ENCODE measurements at regions of chr16 and their contacts with region 1.

Region 1: DNA sequence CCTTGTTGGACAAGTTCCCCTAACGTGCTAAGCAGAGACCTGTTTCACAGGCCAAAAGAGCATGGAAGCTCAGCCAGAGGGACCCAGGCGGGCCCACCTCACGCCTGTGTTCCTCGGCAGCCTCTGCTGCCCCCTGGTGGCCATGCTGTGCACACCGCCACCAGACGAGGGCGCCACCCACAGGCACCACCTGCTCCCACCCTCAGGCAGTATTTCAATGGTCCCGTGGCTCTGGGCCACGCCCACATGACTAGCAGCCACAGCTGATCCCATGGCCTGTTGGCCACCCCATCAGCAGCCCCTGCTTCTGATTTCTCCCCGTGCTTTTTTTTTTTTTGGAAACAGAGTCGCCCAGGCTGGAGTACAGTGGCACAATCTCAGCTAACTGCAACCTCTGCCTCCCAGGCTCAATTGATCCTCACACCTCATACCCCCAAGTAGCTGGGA is 18.9 kb downstream of the MPG start:
- DNase-seq: peak; percentile 88 to 96
- ATAC-seq: peak; percentile 84 to 88
- H3K4me3 ChIP-seq: no peak overlapping the region
- H3K27ac ChIP-seq: no peak overlapping the region
- H3K4me1 ChIP-seq: peaks cover 10% of the 10 kb centered on the region
- CTCF ChIP-seq: peak; percentile 100
- EP300 ChIP-seq: no peak
- POLR2A ChIP-seq: no peak
- RAD21 ChIP-seq: peak; percentile 71 to 72

Region 2: GRCh38 chr16:45454-45853 is 51.5 kb before region 1 on chr16:
- CTCF ChIA-PET with region 1: interaction called, 16 read pairs
- POLR2A ChIA-PET with region 1: no interaction called
- DNase-seq: no peak
- ATAC-seq: peak in 1 of 2 experiments; percentile 53; a peak in 1 of 6 replicates
- H3K4me3 ChIP-seq: no peak overlapping the region
- H3K27ac ChIP-seq: no peak overlapping the region
- H3K4me1 ChIP-seq: peaks cover 16% of the 10 kb centered on the region; the same call in 2 of the 3 replicates
- CTCF ChIP-seq: no peak
- EP300 ChIP-seq: no peak
- POLR2A ChIP-seq: no peak
- RAD21 ChIP-seq: no peak

Region 3: GRCh38 chr16:77807-78443 is 19.0 kb before region 1 on chr16 and contains the start of gene MPG:
- CTCF ChIA-PET with region 1: interaction called, 718 read pairs
- POLR2A ChIA-PET with region 1: interaction called, 8 read pairs
- DNase-seq: peak; percentile 77 to 98
- ATAC-seq: peak; percentile 54 to 76
- H3K4me3 ChIP-seq: peak within 1 kb of the TSS; percentile 94
- H3K27ac ChIP-seq: peak within 1 kb of the TSS; percentile 97 to 98
- H3K4me1 ChIP-seq: peaks cover 30% of the 10 kb centered on the region
- CTCF ChIP-seq: no peak
- EP300 ChIP-seq: no peak
- POLR2A ChIP-seq: peak; percentile 73
- RAD21 ChIP-seq: no peak
- polyA plus RNA-seq, gene MPG: 25.5 and 28.2 TPM in 2 replicates

Region 4: GRCh38 chr16:84718-85406 is 12.1 kb before region 1 on chr16:
- CTCF ChIA-PET with region 1: interaction called, 718 read pairs
- POLR2A ChIA-PET with region 1: no interaction called
- DNase-seq: no peak
- ATAC-seq: peak; percentile 14 to 36; a peak in 5 of 6 replicates
- H3K4me3 ChIP-seq: no peak overlapping the region
- H3K27ac ChIP-seq: peak overlapping the region in 1 of 2 experiments; percentile 60; a peak in 3 of 6 replicates
- H3K4me1 ChIP-seq: peaks cover 10% of the 10 kb centered on the region
- CTCF ChIP-seq: no peak
- EP300 ChIP-seq: no peak
- POLR2A ChIP-seq: no peak
- RAD21 ChIP-seq: no peak

Region 5: GRCh38 chr16:129075-129474 is 32.1 kb after region 1 on chr16:
- CTCF ChIA-PET with region 1: interaction called, 17 read pairs
- POLR2A ChIA-PET with region 1: no interaction called
- DNase-seq: no peak
- ATAC-seq: no peak
- H3K4me3 ChIP-seq: no peak overlapping the region
- H3K27ac ChIP-seq: no peak overlapping the region
- H3K4me1 ChIP-seq: no peaks in the 10 kb centered on the region
- CTCF ChIP-seq: no peak
- EP300 ChIP-seq: no peak
- POLR2A ChIP-seq: no peak
- RAD21 ChIP-seq: no peak

Region 6: GRCh38 chr16:159136-159849 is 62.3 kb after region 1 on chr16:
- CTCF ChIA-PET with region 1: interaction called, 12 read pairs
- POLR2A ChIA-PET with region 1: no interaction called
- DNase-seq: no peak
- ATAC-seq: peak; percentile 22 to 27; a peak in 4 of 6 replicates
- H3K4me3 ChIP-seq: no peak overlapping the region
- H3K27ac ChIP-seq: no peak overlapping the region
- H3K4me1 ChIP-seq: 0 out of 3 replicates have a peak, but pooled peaks cover 5% of the 10 kb centered on the region
- CTCF ChIP-seq: no peak
- EP300 ChIP-seq: no peak
- POLR2A ChIP-seq: no peak
- RAD21 ChIP-seq: no peak

Region 7: GRCh38 chr16:164827-165538 is 68.0 kb after region 1 on chr16:
- CTCF ChIA-PET with region 1: interaction called, 14 read pairs
- POLR2A ChIA-PET with region 1: no interaction called
- DNase-seq: no peak
- ATAC-seq: peak in 1 of 2 experiments; percentile 51; a peak in 3 of 6 replicates
- H3K4me3 ChIP-seq: peak overlapping the region; percentile 47
- H3K27ac ChIP-seq: 0 out of 6 replicates have a peak overlapping the region, but pooled peaks of 1 of the 2 experiments have one; percentile 1
- H3K4me1 ChIP-seq: peaks cover 13% of the 10 kb centered on the region
- CTCF ChIP-seq: no peak
- EP300 ChIP-seq: no peak
- POLR2A ChIP-seq: no peak
- RAD21 ChIP-seq: no peak

Measured in A549 (cell line).